Activated naive CD4-positive, alpha-beta T cell treated with anti-CD3 and anti-CD28 coated beads for 36 hours (primary cell): ENCODE measurements at regions of chr2 and their contacts with region 1.

Region 1: DNA sequence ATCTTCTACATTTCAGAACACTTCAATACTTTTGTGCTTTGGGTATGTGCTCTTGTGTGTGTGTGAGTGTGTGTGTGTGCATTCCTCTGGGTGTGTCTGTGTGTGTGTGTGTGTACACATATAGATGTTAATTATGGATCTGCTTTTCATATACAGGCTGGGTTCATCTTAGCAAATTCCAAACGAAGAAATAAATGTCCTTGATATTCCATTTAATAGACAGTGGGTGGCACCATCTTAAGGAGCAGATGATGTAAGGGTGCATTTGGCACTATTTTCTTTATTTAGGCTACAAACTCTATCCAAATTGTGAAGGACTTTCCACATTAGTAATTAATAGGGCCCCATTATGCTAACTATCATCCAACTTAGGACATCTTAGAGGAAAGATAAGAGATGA is 425.8 kb upstream of the POU3F3 start:
- DNase-seq: no peak
- H3K4me3 Mint-ChIP-seq: no peak overlapping the region
- H3K27ac Mint-ChIP-seq: no peak overlapping the region
- H3K4me1 Mint-ChIP-seq: peaks cover 1% of the 10 kb centered on the region
- H3K27me3 Mint-ChIP-seq: peaks cover 17% of the 10 kb centered on the region

Region 2: GRCh38 chr2:104378853-104379374 is 49.2 kb before region 1 on chr2:
- CTCF ChIA-PET with region 1: no interaction called
- intact Hi-C with region 1: loop called (anchors 5 kb)
- DNase-seq: peak; percentile 30
- H3K4me3 Mint-ChIP-seq: peak overlapping the region; percentile 76
- H3K27ac Mint-ChIP-seq: peak overlapping the region; percentile 81
- H3K4me1 Mint-ChIP-seq: peaks cover 6% of the 10 kb centered on the region
- H3K27me3 Mint-ChIP-seq: no peaks in the 10 kb centered on the region

Region 3: GRCh38 chr2:104919127-104919526 is 491.0 kb after region 1 on chr2:
- CTCF ChIA-PET with region 1: no interaction called
- intact Hi-C with region 1: no loop called
- DNase-seq: no peak
- H3K4me3 Mint-ChIP-seq: no peak overlapping the region
- H3K27ac Mint-ChIP-seq: no peak overlapping the region
- H3K4me1 Mint-ChIP-seq: no peaks in the 10 kb centered on the region
- H3K27me3 Mint-ChIP-seq: no peaks in the 10 kb centered on the region